ENCODE measurements at regions of chr12 and their contacts with region 1.

Region 1: GRCh38 chr12:104877123-104877705 is 80.9 kb downstream of the SLC41A2 start:
- DNase-seq: peak; percentile 40 to 42
- H3K4me3 ChIP-seq: no peak overlapping the region
- H3K27ac ChIP-seq: no peak overlapping the region
- H3K4me1 ChIP-seq: peaks cover 10% of the 10 kb centered on the region; the same call in 1 of the 2 replicates
- H3K27me3 ChIP-seq: no peaks in the 10 kb centered on the region
- CTCF ChIP-seq: peak; percentile 81

Region 2: GRCh38 chr12:104358347-104359003 is 518.7 kb before region 1 on chr12:
- CTCF ChIA-PET with region 1: no interaction called
- POLR2A ChIA-PET with region 1: interaction called, 6 read pairs
- intact Hi-C with region 1: loop called (anchors 1 kb)
- DNase-seq: peak; percentile 64 to 68
- H3K4me3 ChIP-seq: no peak overlapping the region
- H3K27ac ChIP-seq: no peak overlapping the region
- H3K4me1 ChIP-seq: 0 out of 2 replicates have a peak, but pooled peaks cover 11% of the 10 kb centered on the region
- H3K27me3 ChIP-seq: no peaks in the 10 kb centered on the region
- CTCF ChIP-seq: peak; percentile 82

Region 3: DNA sequence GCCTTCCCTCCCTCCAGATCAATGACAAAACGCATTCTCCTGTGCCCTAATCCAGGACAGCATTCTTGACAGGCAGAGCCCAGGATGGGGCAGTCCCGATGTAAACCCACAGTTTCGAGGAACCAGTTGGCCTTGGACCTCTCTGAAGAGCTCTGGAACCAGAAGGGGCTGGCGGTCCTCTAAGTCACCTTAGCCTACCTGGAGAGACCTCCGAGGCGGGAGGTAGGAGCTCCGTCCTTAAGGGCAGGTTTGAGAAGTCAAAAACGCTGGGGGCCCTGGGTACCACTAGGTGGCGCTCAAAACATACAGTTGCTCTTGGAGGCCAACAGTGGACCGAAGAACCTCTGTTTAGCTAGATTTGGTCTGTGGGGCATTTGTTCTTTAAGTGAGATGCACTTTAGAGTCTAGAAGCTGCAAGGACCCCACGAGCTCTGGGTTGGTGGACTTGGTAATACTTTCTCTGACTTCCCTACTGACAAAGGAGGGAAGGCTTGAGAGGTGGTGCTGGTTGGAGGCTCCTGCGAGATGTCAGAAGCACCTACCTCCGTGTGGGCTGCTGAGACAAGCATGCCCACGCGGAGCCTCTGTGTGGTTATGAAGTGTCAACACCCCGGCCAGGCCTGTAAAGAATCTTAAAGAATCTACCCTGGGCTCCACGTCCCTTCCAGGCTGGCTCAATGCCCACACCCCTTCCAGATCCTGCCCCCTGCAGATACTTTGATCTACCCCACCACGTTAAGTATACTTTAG is 495.3 kb before region 1 on chr12:
- CTCF ChIA-PET with region 1: no interaction called
- POLR2A ChIA-PET with region 1: no interaction called
- intact Hi-C with region 1: loop called (anchors 1 kb)
- DNase-seq: peak; percentile 70 to 73
- H3K4me3 ChIP-seq: no peak overlapping the region
- H3K27ac ChIP-seq: no peak overlapping the region
- H3K4me1 ChIP-seq: peaks cover 20% of the 10 kb centered on the region
- H3K27me3 ChIP-seq: no peaks in the 10 kb centered on the region
- CTCF ChIP-seq: peak; percentile 98

Region 4: DNA sequence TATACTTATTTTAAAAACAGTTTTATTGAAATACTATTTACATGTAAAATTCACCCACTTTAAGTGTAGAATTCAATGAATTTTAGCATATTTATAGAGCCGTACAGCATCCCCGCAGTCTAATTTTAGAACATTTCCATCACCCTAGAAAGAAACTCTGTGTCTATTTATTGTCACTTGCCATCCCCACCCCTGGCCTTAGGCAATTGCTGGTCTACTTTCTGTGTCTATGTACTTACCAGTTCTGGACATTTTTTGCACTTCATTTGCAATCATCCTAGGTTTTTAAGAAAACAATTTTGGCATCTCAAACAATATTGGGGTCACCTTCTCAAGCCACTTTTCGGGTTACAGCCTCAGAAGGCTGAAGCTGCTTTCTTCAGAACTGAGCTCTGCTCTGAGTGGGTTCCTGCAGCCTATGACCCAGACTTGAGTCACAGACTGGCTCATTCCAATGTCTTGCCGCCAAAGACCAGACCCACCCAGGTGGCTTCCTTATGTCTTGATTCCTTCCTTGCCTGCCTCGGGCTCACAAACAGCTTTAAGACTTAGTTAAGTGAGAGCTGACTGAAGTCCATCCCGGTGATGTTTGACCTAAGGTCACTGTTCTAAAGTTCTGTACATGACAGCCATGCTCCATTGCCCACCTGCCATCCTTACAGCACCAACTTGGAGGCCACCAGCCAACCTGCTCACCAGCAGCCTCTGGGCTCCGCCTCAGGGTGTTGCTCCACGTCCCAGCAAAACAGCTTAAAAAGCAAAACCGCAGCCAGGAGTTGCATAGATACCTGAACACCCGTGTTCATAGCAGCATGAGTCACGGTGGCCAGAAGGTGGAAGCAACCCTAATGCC is 288.9 kb before region 1 on chr12:
- CTCF ChIA-PET with region 1: no interaction called
- POLR2A ChIA-PET with region 1: no interaction called
- intact Hi-C with region 1: loop called (anchors 5 kb)
- DNase-seq: peak; percentile 90 to 98
- H3K4me3 ChIP-seq: peak overlapping the region; percentile 41
- H3K27ac ChIP-seq: peak overlapping the region; percentile 91
- H3K4me1 ChIP-seq: peaks cover 71% of the 10 kb centered on the region
- H3K27me3 ChIP-seq: no peaks in the 10 kb centered on the region
- CTCF ChIP-seq: no peak

Region 5: DNA sequence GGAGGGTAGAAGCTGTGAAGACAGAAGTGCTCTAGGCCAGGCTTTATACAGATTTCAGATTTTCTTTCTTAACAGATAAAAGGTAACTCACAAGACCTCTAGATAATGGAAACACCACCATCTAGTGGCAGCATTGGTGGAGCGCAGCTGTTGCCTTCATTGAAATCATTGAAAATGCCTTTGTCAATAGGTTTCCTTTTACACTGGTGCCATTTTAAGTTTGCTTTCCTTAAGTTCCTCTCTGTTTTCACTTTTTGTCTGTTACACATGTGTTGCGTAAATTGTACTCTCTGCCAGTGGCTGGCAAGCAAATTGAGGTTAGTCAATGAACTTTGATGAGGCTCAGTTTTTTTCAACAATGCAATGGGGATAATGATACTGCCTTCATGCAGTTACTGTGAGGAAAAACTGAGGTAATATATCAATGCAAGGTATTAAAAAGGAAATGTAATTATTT is 175.9 kb after region 1 on chr12:
- CTCF ChIA-PET with region 1: no interaction called
- POLR2A ChIA-PET with region 1: no interaction called
- intact Hi-C with region 1: loop called (anchors 2 kb)
- DNase-seq: peak; percentile 65 to 70
- H3K4me3 ChIP-seq: no peak overlapping the region
- H3K27ac ChIP-seq: no peak overlapping the region
- H3K4me1 ChIP-seq: no peaks in the 10 kb centered on the region
- H3K27me3 ChIP-seq: no peaks in the 10 kb centered on the region
- CTCF ChIP-seq: peak; percentile 92